Activated T-helper 2 cell treated with anti-CD3 and anti-CD28 coated beads, Interferon-gamma antibody, Interleukin-2, Interleukin-4, amounts not matched to agents 10 μg/mL and 5 μg/mL and 100 μg/mL, durations not matched to agents 14 hours and 24 hours and 36 hours (primary cell): ENCODE measurements at regions of chr2 and their contacts with region 1.

Region 1: DNA sequence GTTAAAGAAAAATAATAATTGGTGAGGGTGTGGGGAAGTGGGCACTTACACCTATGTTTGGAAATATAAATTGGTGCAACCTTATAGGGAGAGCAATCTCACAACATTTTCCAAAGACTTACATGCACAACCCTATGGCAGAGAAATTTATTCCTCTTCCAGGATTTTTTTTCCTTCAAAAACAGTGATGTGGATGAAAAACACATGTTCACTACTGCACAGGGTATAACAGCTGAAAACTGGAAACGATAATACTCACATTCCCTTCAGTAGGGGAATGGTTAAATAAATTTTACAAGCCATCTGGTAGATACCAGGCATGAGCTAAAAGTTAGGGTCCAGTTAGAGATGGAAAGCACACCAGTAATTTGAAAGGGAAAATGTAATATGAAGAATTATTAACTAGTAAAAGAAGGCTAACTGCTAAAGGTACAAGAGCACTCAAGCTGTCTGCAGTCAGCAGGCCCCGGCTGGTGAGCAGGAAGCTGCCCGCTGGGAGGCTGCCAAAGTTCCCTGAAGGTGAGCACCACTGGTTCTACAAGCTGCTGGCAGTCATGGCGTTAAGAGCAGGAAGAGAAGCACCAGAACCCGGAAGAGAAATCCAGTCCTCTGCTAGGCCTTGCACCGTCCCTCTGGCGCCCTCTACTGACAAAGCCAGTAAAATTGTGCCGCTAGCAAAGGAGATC is 28.4 kb upstream of the CASP8 start:
- DNase-seq: peak; percentile 88
- H3K4me3 Mint-ChIP-seq: peak overlapping the region; percentile 54
- H3K27ac Mint-ChIP-seq: peak overlapping the region; percentile 88
- H3K4me1 Mint-ChIP-seq: peaks cover 43% of the 10 kb centered on the region
- H3K27me3 Mint-ChIP-seq: no peaks in the 10 kb centered on the region

Region 2: DNA sequence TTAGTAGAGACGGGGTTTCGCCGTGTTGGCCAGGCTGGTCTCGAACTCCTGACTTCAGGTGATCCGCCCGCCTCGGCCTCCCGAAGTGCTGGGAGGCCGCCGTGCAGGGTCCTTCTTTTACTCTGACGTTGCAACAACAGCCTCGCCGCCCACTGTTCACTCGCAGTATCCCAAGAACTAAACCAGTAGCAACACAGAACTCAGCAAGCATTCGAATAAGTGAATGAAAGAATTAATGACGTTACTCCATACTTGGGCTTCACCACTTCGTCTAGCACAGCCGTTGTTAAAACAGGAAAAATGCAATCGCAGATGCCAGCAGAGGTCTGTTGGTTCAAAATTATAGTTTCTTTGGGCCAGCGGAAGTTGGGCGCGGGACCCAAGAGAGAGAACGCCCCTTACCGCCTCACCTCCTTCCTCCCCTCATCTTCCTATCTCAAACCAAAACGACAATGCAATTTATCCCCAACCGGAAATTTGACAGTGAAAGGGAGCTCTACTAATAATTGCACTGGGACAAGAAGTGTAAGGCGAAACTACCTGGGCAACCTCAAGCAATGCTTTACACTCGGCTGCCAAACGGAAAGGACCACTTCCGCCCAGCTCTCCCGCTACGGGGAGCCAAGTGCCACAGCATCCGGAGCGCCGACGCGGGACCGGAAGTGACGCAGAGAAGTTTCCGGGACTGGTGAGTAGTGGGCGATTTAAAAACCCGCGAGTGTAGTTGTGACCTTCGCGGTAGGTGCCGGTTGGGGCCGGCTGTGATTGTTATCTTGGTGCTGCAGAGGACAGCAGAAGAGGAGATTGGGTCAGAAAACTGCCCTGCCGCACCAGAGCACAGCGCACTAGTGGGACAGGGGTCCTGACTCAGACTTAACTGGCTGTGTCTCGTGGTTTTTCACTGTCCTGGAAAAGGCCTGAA is 343.0 kb before region 1 on chr2 and contains the starts of genes NIF3L1 and PPIL3:
- intact Hi-C with region 1: loop called (anchors 1 kb)
- DNase-seq: peak; percentile 97
- H3K4me3 Mint-ChIP-seq: peak within 1 kb of the TSS; percentile 95
- H3K27ac Mint-ChIP-seq: peak within 1 kb of the TSS; percentile 100
- H3K4me1 Mint-ChIP-seq: peaks cover 45% of the 10 kb centered on the region
- H3K27me3 Mint-ChIP-seq: no peaks in the 10 kb centered on the region
- total RNA-seq, gene NIF3L1: 23.9 and 24.8 TPM in 2 replicates
- total RNA-seq, gene PPIL3: 55.4 and 57.8 TPM in 2 replicates

Region 3: DNA sequence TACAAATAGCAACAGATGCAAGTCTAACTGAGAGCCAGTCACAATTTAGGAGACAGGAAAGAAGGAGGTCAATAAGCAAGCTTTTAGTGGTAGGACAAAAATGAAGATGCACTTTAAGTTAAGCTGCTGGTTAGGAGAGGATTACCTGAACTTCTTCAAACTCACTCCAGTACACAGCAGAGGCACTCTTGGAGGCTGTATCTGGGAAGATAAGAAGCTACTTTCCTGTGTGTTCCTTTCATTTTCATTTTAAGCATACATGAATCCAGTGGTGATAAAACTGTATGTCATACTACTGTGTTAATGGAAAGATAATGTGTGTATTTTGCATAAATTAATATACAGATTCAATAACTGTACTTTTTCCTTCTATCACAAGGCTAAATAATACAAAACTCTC is 210.0 kb before region 1 on chr2:
- intact Hi-C with region 1: no loop called
- DNase-seq: no peak
- H3K4me3 Mint-ChIP-seq: no peak overlapping the region
- H3K27ac Mint-ChIP-seq: peak overlapping the region; percentile 39
- H3K4me1 Mint-ChIP-seq: peaks cover 16% of the 10 kb centered on the region
- H3K27me3 Mint-ChIP-seq: no peaks in the 10 kb centered on the region

Region 4: DNA sequence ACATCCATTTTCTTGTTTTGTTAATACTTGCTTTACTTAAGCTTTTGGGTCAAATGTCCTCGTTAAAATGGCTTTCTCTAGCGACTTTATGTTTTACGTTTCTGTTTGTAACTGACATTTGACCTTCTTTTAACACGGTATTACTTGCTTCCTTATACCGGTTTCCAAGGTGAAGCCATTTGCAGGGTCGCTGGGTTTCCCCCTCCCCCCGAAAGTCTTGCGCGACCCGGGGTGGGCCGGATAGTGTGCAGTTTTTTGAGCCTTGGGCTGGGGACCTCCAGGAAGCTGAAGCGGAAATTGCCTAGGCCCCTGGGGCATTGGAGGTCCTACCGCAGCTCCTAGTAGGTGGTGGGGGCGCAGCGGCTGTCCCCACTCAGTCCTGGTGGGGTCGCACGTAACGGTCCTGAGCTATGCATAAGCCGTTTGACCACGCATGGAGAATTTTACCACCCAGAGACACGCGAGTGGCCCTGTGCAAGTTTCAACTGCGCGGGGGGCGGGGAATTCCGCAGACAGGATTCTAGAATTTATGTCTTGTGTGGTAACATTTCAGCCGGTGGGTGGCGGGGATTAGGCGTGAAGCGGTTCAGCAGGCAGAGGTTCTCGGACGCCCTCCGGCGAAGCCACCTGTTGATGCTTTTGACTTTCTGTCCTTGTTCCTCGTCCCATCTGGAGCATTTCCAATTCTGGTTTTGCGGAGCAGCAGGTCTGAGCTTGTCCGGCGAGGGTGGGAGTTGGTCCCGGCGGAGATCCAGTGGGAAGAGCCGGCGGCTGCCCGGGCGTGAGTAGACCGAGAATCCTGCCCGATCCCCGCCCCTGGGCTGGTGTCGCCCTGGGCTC is 113.6 kb before region 1 on chr2:
- intact Hi-C with region 1: loop called (anchors 2 kb)
- DNase-seq: peak; percentile 76
- H3K4me3 Mint-ChIP-seq: peak overlapping the region; percentile 94
- H3K27ac Mint-ChIP-seq: peak overlapping the region; percentile 95
- H3K4me1 Mint-ChIP-seq: peaks cover 42% of the 10 kb centered on the region
- H3K27me3 Mint-ChIP-seq: no peaks in the 10 kb centered on the region

Region 5: GRCh38 chr2:201208563-201209252 is 23.2 kb before region 1 on chr2:
- intact Hi-C with region 1: loop called (anchors 1 kb)
- DNase-seq: no peak
- H3K4me3 Mint-ChIP-seq: no peak overlapping the region
- H3K27ac Mint-ChIP-seq: no peak overlapping the region
- H3K4me1 Mint-ChIP-seq: peaks cover 16% of the 10 kb centered on the region
- H3K27me3 Mint-ChIP-seq: no peaks in the 10 kb centered on the region

Region 6: DNA sequence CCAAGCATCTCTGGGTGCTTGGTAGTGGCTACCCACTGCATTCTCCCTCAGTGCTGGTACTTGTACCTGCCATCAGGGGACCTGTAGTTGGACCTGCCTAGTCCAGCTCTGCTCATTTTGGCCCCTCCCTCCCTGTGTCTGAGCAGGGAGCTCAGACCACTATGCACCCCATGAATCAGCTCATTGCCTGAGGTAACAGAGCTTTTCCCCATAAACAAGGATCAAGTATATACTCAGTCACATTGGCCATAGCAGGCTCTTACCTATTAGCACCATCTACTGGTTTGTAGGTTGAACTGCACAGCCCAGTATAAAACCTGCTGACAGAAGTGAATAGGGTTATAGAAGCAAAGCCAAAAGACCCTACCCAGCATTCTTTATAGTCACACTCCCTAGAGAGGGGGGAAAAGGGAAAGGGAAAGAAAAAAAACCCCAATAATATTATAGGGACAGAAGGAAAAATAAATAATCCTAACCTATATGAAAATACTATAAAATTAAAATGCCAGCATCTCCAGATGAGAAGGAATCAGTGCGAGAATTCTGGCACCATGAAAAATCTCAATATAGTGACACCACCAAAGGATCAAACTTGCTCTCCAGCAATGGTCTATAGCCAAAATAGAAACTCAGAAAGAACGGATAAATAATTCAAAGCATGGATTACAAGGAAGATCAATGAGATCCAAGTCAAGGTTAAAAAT is 132.1 kb after region 1 on chr2:
- intact Hi-C with region 1: loop called (anchors 1 kb)
- DNase-seq: no peak
- H3K4me3 Mint-ChIP-seq: no peak overlapping the region
- H3K27ac Mint-ChIP-seq: no peak overlapping the region
- H3K4me1 Mint-ChIP-seq: peaks cover 31% of the 10 kb centered on the region
- H3K27me3 Mint-ChIP-seq: no peaks in the 10 kb centered on the region

Region 7: GRCh38 chr2:201780674-201781581 is 549.0 kb after region 1 on chr2 and contains the start of gene ALS2:
- intact Hi-C with region 1: loop called (anchors 5 kb)
- DNase-seq: peak; percentile 90
- H3K4me3 Mint-ChIP-seq: peak within 1 kb of the TSS; percentile 97
- H3K27ac Mint-ChIP-seq: peak within 1 kb of the TSS; percentile 95
- H3K4me1 Mint-ChIP-seq: peaks cover 19% of the 10 kb centered on the region
- H3K27me3 Mint-ChIP-seq: peaks cover 11% of the 10 kb centered on the region
- total RNA-seq, gene ALS2: 11.3 and 14.3 TPM in 2 replicates